Activated naive CD4-positive, alpha-beta T cell treated with anti-CD3 and anti-CD28 coated beads for 36 hours (primary cell): ENCODE measurements at regions of chr16 and their contacts with region 1.

Region 1: GRCh38 chr16:69217433-69217832 is 30.5 kb downstream of the SNTB2 start:
- DNase-seq: no peak
- H3K4me3 Mint-ChIP-seq: no peak overlapping the region
- H3K27ac Mint-ChIP-seq: no peak overlapping the region
- H3K4me1 Mint-ChIP-seq: peaks cover 7% of the 10 kb centered on the region
- H3K27me3 Mint-ChIP-seq: no peaks in the 10 kb centered on the region

Region 2: DNA sequence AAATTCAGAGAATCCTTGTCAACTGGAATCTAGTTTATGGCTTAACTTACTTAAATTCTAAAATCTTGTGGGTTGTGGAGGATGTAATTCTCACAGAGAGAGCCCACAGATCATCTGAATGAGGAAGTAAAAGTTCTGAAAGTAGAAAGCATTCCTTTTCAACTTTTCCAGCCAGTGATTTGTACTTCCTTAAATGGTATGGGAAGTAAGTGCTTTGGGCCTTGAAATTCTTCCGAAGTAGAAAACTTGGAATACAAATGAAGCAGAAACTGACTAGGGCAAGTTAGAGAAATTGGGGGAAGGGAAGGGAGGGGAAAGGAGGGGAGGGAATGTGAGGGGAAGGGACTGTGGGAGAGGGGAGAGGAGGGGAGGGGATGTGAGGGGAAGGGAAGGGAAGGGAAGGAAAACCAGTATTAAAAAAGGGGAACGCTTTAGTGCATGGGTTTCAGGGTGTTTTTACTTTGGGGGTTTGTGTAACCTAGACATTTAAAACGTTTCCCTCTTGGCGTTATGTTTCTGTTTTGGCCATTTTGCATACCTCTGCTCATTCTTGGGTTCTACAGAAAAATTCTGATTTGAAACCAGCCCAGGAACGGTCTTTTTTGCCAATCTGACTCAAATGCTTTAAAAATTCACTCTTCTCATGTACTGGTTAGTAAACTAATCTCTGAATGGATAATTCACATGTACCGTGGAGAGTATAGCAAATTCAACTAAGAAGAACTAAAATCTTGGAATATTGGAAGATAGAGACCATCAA is 45.9 kb before region 1 on chr16:
- CTCF ChIA-PET with region 1: no interaction called
- intact Hi-C with region 1: loop called (anchors 5 kb)
- DNase-seq: no peak
- H3K4me3 Mint-ChIP-seq: no peak overlapping the region
- H3K27ac Mint-ChIP-seq: no peak overlapping the region
- H3K4me1 Mint-ChIP-seq: peaks cover 20% of the 10 kb centered on the region
- H3K27me3 Mint-ChIP-seq: no peaks in the 10 kb centered on the region

Region 3: DNA sequence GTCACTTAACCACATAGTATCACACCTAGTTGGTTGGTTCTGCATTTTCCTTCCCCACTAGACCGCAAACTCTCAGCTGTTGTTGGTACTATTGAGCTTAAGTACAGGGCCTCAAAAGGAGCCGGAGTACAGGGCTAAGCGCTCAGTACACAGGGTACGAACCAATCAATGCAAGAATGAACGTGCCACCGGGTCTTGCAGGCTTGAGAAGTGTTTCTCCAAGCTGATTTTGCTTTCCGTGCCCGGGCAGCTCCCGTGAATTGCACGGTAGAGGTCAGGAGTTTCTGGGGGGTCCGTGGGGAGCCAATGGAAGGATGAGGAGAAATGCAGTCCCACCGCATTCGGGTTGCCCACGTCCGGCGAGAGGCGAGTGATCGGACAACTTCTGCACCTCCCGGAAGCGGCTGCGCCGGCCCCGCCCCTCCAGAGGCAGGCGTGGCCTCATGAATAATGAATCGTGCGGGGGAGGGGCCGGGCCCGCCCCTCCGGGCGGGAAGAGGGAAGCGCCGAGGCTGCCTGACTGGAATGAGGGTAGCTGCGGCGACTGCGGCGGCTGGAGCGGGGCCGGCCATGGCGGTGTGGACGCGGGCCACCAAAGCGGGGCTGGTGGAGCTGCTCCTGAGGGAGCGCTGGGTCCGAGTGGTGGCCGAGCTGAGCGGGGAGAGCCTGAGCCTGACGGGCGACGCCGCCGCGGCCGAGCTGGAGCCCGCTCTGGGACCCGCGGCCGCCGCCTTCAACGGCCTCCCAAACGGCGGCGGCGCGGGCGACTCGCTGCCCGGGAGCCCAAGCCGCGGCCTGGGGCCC is 30.6 kb before region 1 on chr16 and contains the start of gene SNTB2:
- CTCF ChIA-PET with region 1: no interaction called
- intact Hi-C with region 1: loop called (anchors 2 kb)
- DNase-seq: peak; percentile 86
- H3K4me3 Mint-ChIP-seq: peak within 1 kb of the TSS; percentile 91
- H3K27ac Mint-ChIP-seq: peak within 1 kb of the TSS; percentile 83
- H3K4me1 Mint-ChIP-seq: peaks cover 42% of the 10 kb centered on the region
- H3K27me3 Mint-ChIP-seq: no peaks in the 10 kb centered on the region
- total RNA-seq, gene SNTB2: 7.3 to 7.8 TPM

Region 4: GRCh38 chr16:69204172-69204571 is 13.3 kb before region 1 on chr16:
- CTCF ChIA-PET with region 1: interaction called, 3 read pairs
- intact Hi-C with region 1: loop called (anchors 1 kb)
- DNase-seq: no peak
- H3K4me3 Mint-ChIP-seq: no peak overlapping the region
- H3K27ac Mint-ChIP-seq: no peak overlapping the region
- H3K4me1 Mint-ChIP-seq: peaks cover 16% of the 10 kb centered on the region
- H3K27me3 Mint-ChIP-seq: no peaks in the 10 kb centered on the region

Region 5: DNA sequence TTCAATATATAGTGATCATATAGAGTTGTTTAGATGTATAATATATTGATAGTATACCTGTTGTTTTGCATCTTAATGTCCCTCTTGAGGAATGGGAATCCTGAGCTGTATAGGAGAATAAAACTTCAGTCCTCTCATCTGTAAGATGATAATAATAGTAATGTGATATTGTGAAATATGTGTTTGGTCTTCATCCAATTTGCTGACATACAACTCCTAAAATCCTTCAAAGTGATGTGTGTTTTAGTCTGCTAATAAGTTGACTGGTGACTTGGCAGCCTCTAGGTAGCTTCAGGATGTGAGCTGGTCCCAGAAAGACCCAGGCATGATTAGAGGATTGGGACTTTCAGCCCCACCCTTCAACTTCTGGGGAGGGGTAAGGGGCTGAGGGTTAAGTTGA is 325.5 kb after region 1 on chr16:
- CTCF ChIA-PET with region 1: no interaction called
- intact Hi-C with region 1: no loop called
- DNase-seq: no peak
- H3K4me3 Mint-ChIP-seq: no peak overlapping the region
- H3K27ac Mint-ChIP-seq: no peak overlapping the region
- H3K4me1 Mint-ChIP-seq: no peaks in the 10 kb centered on the region
- H3K27me3 Mint-ChIP-seq: no peaks in the 10 kb centered on the region

Region 6: DNA sequence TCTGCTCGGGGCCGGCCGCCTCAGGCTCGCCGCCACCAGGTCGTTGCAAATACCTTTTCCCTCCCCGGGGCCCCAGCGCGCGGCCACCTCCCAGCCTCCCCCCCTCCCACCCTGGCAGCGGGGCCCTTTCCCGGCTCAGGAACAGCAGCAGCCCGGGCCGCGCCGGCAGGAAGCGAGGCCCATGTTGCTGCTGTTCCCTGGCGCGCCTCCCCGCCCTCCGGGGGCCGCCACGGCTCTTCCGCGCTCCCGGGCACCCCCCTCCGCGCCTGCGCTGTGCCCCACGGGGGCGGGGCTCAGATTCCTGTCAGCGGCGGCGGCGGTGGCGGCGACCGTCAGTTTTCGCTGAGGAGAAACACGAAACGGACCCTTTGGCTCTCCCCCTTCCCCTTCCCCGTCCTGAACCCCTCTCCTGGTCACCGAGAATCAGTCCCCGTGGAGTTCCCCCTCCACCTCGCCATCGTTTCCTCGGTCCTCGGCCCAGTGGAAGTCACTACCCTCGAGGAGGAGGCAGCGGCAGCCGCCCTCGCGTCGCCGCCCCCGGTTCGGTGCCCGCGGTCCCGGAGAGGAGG is 348.3 kb after region 1 on chr16 and contains the start of gene NFAT5:
- CTCF ChIA-PET with region 1: no interaction called
- intact Hi-C with region 1: no loop called
- DNase-seq: peak; percentile 89
- H3K4me3 Mint-ChIP-seq: peak within 1 kb of the TSS; percentile 98
- H3K27ac Mint-ChIP-seq: peak within 1 kb of the TSS; percentile 100
- H3K4me1 Mint-ChIP-seq: peaks cover 50% of the 10 kb centered on the region
- H3K27me3 Mint-ChIP-seq: no peaks in the 10 kb centered on the region
- total RNA-seq, gene NFAT5: 33.0 to 34.0 TPM